Vagina (tissue), 2 donors: ENCODE measurements at regions of chr7 and their contacts with region 1.

Region 1: DNA sequence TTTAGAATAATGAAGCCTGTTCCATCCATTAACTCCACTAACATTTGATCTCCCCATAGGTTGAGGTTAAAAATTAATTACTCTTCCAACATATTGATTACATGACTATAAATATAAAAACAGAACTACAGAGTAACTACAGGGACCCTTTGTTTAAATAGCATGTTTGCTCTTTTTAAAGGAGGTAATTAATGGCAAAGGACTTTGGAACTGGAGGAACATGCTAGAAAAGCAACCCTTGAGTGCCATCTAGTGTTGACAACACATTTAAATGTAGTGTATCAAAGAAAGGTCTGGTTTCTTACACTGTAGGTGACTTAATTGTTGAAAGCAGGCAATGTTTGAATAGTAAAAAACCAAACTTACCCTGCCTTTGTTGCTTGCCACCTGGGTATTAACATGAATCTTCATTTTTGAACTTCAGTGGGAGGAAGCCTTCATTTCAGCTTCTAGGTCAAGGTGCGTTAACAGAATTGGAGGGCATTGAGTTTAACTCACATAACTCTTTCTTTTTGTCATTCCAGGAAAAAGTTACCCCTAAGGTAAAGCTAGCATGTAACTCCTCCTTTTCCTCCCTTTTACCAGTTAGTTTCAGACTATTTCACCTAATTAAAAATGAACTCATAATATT is 52.6 kb upstream of the CAPZA2 start:
- DNase-seq: no peak
- H3K4me3 ChIP-seq: no peak overlapping the region
- H3K27ac ChIP-seq: no peak overlapping the region
- H3K4me1 ChIP-seq: no peaks in the 10 kb centered on the region
- H3K27me3 ChIP-seq: no peaks in the 10 kb centered on the region
- CTCF ChIP-seq: peak; percentile 42 to 72 (median 53)
- POLR2A ChIP-seq: no peak

Region 2: DNA sequence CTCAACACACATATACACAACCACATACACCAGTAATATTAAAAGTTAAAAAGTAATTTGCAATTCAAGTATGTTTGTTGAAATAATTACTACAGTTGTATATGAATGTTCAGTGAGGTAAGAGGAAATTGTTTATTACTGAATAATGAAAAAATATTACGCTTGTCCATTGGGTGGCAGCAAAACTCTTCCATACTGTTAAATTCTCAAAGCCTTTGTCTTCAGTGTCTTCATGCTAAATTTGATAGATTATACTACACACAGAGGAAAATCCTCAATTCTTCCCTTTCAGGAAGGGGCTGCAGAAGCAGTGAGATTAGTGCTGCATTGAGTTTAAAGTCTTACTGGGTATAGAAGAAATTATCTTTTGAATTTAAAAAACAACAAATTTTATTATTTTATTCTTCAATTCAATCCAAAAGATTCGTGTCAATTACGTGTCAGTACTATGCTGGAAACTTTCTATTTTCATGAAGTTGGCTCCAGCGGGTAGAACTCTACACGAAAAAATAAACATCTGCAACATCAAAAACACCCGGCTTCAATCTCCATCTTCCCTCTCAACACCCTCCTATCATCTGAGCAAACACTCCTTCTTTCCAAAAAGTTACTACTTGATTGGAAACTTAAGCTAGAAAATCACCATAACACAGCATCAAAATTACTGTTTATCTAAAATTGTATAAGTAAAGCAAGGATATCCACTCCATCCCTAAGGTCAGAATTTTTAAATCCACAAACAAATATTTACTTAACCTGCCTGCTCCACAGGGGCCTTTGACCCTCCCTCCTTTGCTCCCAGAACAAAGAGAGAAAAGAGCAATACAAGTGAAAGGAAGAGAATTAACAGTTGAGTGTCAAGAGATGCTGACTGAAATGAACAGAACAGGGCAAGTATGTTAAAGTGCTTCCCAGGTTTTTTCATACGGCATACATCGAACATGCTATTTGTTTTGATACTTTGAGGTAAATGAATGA is 636.4 kb before region 1 on chr7:
- intact Hi-C with region 1: loop called (anchors 10 kb)
- DNase-seq: no peak
- H3K4me3 ChIP-seq: no peak overlapping the region
- H3K27ac ChIP-seq: no peak overlapping the region
- H3K4me1 ChIP-seq: no peaks in the 10 kb centered on the region
- H3K27me3 ChIP-seq: no peaks in the 10 kb centered on the region
- CTCF ChIP-seq: peak; percentile 45 to 57 (median 53)
- POLR2A ChIP-seq: no peak

Region 3: GRCh38 chr7:116258734-116259133 is 551.0 kb before region 1 on chr7:
- intact Hi-C with region 1: loop called (anchors 10 kb)
- DNase-seq: no peak
- H3K4me3 ChIP-seq: no peak overlapping the region
- H3K27ac ChIP-seq: peak overlapping the region; percentile 48
- H3K4me1 ChIP-seq: peaks cover 5% of the 10 kb centered on the region
- H3K27me3 ChIP-seq: no peaks in the 10 kb centered on the region
- CTCF ChIP-seq: peak; percentile 78 to 92 (median 86)
- POLR2A ChIP-seq: no peak

Region 4: GRCh38 chr7:116588641-116589594 is 220.8 kb before region 1 on chr7:
- intact Hi-C with region 1: loop called (anchors 5 kb)
- DNase-seq: no peak
- H3K4me3 ChIP-seq: no peak overlapping the region
- H3K27ac ChIP-seq: peak overlapping the region; percentile 8
- H3K4me1 ChIP-seq: peaks cover 29% of the 10 kb centered on the region
- H3K27me3 ChIP-seq: no peaks in the 10 kb centered on the region
- CTCF ChIP-seq: peak; percentile 43 to 79 (median 66)
- POLR2A ChIP-seq: no peak

Region 5: GRCh38 chr7:116630932-116631745 is 178.6 kb before region 1 on chr7:
- intact Hi-C with region 1: no loop called
- DNase-seq: no peak
- H3K4me3 ChIP-seq: no peak overlapping the region
- H3K27ac ChIP-seq: peak overlapping the region; percentile 34
- H3K4me1 ChIP-seq: peaks cover 8% of the 10 kb centered on the region
- H3K27me3 ChIP-seq: no peaks in the 10 kb centered on the region
- CTCF ChIP-seq: no peak
- POLR2A ChIP-seq: no peak